Panc1 (cell line): ENCODE measurements at regions of chrX and their contacts with region 1.

Region 1: GRCh38 chrX:120250522-120251271 is at the start of gene ZBTB33:
- DNase-seq: peak; percentile 86
- ATAC-seq: peak; percentile 100
- H3K4me3 ChIP-seq: peak within 1 kb of the TSS; percentile 81 to 88
- H3K27ac ChIP-seq: peak within 1 kb of the TSS; percentile 94
- H3K4me1 ChIP-seq: peaks cover 17% of the 10 kb centered on the region; the same call in 1 of the 2 replicates
- H3K27me3 ChIP-seq: peaks cover 4% of the 10 kb centered on the region; the same call in 1 of the 2 replicates
- CTCF ChIP-seq: peak; percentile 91
- total RNA-seq, gene ZBTB33: 21.5 TPM

Region 2: GRCh38 chrX:120125444-120125843 is 125.3 kb before region 1 on chrX:
- CTCF ChIA-PET with region 1: no interaction called
- POLR2A ChIA-PET with region 1: no interaction called
- in situ Hi-C with region 1: no loop called
- intact Hi-C with region 1: no loop called
- DNase-seq: no peak
- ATAC-seq: peak; percentile 58; the same call in 1 of the 2 replicates
- H3K4me3 ChIP-seq: no peak overlapping the region; a peak in 1 of 4 replicates
- H3K27ac ChIP-seq: no peak overlapping the region
- H3K4me1 ChIP-seq: no peaks in the 10 kb centered on the region
- H3K27me3 ChIP-seq: no peaks in the 10 kb centered on the region
- CTCF ChIP-seq: no peak

Region 3: DNA sequence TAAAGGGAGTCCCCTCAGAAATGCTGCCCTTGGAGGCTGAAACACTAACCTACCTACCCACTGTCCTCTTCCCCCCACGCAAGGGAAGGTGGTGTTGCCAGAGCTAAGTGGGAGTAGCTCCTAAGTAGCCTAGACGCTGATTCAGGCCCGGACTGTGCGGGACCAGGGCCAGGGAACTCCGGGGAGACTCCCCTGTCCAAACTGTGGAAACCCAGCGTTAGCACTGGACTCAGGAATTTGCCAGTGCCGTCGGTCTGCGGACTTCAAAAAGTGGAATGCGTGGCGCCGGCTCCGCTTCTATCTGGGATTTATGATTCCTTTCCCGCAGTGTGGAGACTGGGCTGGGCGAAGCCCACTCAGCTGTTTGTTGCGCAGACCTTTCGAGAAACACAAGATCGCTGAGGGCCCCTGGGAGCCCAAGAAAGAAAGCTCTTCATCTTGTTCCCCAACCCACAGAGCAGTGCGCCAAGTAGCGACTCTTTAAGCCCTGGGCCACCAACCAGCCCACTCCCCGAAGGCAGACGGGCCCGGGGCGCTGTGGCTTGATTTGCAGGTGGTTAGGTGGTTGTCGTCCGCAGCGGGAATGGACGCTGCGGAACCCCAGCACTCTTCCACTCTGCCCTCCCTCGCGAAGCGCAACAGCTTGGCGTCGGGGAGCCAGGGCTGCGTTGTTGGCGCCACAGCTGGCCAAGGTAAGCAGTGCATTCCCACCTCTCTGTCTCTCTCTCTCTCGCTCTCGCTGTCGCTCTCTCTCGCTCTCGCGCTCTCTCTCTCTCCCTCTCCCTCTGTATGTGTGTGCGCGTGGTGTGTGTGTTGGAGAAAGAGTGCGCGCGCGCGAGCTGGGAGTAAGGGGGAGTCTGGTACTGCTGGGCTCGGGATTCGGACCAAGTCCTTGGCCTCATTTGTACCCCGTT is 58.5 kb after region 1 on chrX:
- CTCF ChIA-PET with region 1: no interaction called
- POLR2A ChIA-PET with region 1: no interaction called
- in situ Hi-C with region 1: no loop called
- intact Hi-C with region 1: loop called (anchors 10 kb)
- DNase-seq: no peak
- ATAC-seq: peak; percentile 95
- H3K4me3 ChIP-seq: peak overlapping the region; percentile 27 to 45
- H3K27ac ChIP-seq: no peak overlapping the region
- H3K4me1 ChIP-seq: peaks cover 13% of the 10 kb centered on the region
- H3K27me3 ChIP-seq: peaks cover 31% of the 10 kb centered on the region
- CTCF ChIP-seq: peak; percentile 80

Region 4: DNA sequence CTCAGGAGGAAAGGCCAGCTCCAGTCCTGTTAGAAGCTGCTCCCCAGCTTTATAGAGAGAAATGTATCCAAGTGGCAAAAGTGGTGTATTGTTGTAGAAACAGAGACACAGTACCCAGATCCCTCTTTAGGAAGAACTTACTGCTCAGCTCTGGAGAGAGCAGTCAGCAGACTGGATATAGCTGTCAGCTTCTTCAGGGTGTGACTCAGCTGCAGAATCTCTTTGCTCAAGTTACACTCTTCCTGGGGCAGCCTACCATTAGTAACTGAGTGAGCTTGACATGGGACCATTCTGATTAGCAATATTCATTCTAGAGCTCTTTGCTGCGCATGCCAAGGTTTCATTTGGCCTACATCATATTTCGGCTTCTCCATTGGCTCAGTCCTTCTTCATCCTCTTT is 151.7 kb after region 1 on chrX:
- CTCF ChIA-PET with region 1: no interaction called
- POLR2A ChIA-PET with region 1: no interaction called
- in situ Hi-C with region 1: no loop called
- intact Hi-C with region 1: no loop called
- DNase-seq: no peak
- ATAC-seq: no peak
- H3K4me3 ChIP-seq: no peak overlapping the region
- H3K27ac ChIP-seq: no peak overlapping the region
- H3K4me1 ChIP-seq: no peaks in the 10 kb centered on the region
- H3K27me3 ChIP-seq: peaks cover 2% of the 10 kb centered on the region; the same call in 1 of the 2 replicates
- CTCF ChIP-seq: no peak

Region 5: GRCh38 chrX:120457766-120458180 is 207.1 kb after region 1 on chrX:
- CTCF ChIA-PET with region 1: interaction called, 4 read pairs
- POLR2A ChIA-PET with region 1: interaction called, 13 read pairs
- in situ Hi-C with region 1: no loop called
- intact Hi-C with region 1: no loop called
- DNase-seq: peak; percentile 5
- ATAC-seq: peak; percentile 75
- H3K4me3 ChIP-seq: no peak overlapping the region
- H3K27ac ChIP-seq: no peak overlapping the region
- H3K4me1 ChIP-seq: peaks cover 12% of the 10 kb centered on the region; the same call in 1 of the 2 replicates
- H3K27me3 ChIP-seq: no peaks in the 10 kb centered on the region
- CTCF ChIP-seq: no peak

Region 6: GRCh38 chrX:120468825-120469525 is 218.3 kb after region 1 on chrX and contains the start of gene LAMP2:
- CTCF ChIA-PET with region 1: no interaction called
- POLR2A ChIA-PET with region 1: no interaction called
- in situ Hi-C with region 1: no loop called
- intact Hi-C with region 1: loop called (anchors 5 kb)
- DNase-seq: peak; percentile 54
- ATAC-seq: peak; percentile 99
- H3K4me3 ChIP-seq: peak within 1 kb of the TSS; percentile 86 to 94
- H3K27ac ChIP-seq: peak within 1 kb of the TSS; percentile 92
- H3K4me1 ChIP-seq: peaks cover 12% of the 10 kb centered on the region
- H3K27me3 ChIP-seq: no peaks in the 10 kb centered on the region
- CTCF ChIP-seq: no peak
- total RNA-seq, gene LAMP2: 243 TPM